BJ (cell line): ENCODE measurements at regions of chr7 and their contacts with region 1.

Region 1: GRCh38 chr7:149669121-149669818 is 104.1 kb downstream of the ZNF467 start:
- DNase-seq: no peak
- H3K4me3 ChIP-seq: no peak overlapping the region
- H3K27me3 ChIP-seq: peaks cover 2% of the 10 kb centered on the region
- CTCF ChIP-seq: peak; percentile 49

Region 2: DNA sequence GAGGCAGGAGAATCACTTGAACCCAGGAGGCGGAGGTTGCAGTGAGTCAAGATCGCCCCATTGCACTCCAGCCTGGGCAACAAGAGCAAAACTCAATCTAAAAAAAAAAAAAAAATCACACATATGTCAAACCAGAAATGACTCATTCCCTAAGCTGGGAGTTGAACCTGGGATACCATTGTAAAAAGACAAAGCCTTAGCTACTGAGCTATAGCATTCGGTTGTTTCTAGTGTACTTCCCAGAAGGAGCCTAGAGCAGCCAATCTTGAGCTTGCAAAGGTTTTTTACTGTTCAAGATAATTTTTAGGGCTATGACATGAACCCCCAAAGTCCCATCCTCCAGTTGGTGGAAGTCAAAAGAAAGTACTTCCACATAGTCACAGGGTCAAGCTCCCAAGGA is 16.2 kb after region 1 on chr7:
- CTCF ChIA-PET with region 1: interaction called, 12 read pairs
- POLR2A ChIA-PET with region 1: no interaction called
- DNase-seq: no peak
- H3K4me3 ChIP-seq: no peak overlapping the region
- H3K27me3 ChIP-seq: no peaks in the 10 kb centered on the region; the same call in 1 of the 2 replicates
- CTCF ChIP-seq: no peak